Heart right ventricle (tissue), 16 donors: ENCODE measurements at regions of chr2 and their contacts with region 1.

Region 1: DNA sequence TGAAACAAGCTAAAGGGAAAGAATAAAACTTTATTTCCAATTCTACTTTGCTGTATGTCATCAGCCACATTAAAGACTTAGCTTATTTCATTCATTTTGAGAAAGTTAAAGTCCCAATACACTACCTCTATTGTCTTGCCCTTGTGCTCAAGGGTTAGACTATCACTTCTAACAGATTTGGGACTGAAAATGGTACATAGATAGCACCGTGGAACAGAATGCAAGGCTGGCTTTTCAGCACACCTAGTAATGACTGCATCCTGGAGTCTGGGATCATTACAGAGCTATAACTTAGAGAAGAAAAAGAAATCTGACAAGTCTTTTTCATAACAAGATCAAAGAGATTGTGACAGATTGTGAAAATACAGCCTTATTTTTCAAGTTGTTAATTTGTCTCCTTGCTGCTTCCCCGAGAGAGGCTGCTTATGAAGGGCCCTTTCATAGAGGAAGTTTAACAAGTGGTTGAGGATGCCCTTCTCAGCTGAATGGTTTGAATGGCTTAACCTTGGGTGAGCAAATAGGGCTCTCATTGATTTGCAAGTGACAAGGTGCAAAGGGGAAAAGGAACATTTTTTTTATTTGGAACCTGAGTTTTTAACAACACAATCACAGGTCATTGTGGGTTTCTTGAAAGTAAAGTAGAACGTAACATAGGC is 371.8 kb downstream of the EPHA4 start:
- DNase-seq: no peak
- ATAC-seq: no peak
- H3K4me3 ChIP-seq: no peak overlapping the region
- H3K27ac ChIP-seq: no peak overlapping the region
- H3K4me1 ChIP-seq: no peaks in the 10 kb centered on the region
- H3K27me3 ChIP-seq: no peaks in the 10 kb centered on the region
- CTCF ChIP-seq: no peak

Region 2: DNA sequence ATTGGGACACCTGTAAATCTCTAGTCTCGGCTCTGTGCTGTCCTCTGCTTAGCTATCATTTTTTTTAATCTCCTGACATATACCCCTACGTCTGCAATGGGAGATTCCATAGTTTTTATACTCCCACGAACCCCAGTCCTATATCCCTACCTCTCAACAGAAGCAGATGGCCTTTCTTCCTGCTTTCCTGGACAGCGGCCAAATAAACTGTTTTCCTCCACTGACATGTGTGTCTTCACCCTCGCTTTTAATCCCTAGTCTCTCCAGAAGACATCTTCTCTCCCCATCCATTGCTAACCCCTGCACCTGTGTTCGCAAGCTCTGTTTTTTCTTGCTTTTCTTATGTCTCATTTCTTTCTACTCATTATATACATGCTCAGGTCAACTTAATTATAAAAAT is 23.6 kb before region 1 on chr2:
- intact Hi-C with region 1: loop called in 1 of 10 experiments (anchors 2 kb)
- DNase-seq: no peak
- ATAC-seq: no peak
- H3K4me3 ChIP-seq: no peak overlapping the region
- H3K27ac ChIP-seq: no peak overlapping the region
- H3K4me1 ChIP-seq: no peaks in the 10 kb centered on the region
- H3K27me3 ChIP-seq: no peaks in the 10 kb centered on the region
- CTCF ChIP-seq: no peak

Region 3: DNA sequence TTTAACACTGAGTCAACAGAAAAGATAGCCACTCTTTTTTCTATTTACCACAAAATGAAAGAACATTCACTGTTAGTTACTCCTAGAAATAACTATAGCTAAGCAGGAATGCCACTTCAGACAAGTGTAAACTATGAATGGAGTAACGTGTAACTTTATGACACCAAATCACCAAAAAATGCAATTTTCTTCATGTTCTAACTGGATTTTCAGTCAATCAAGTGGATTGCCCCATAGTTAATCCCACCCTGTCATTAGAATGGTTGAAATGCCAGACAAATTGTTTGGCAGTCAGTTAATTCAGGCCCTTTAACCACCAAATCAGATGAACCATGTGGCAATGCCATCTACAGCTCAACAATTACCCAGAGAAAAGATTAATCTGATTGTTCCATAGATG is 361.9 kb after region 1 on chr2:
- intact Hi-C with region 1: no loop called
- DNase-seq: no peak
- ATAC-seq: no peak
- H3K4me3 ChIP-seq: no peak overlapping the region
- H3K27ac ChIP-seq: no peak overlapping the region
- H3K4me1 ChIP-seq: peaks cover 0 to 79% (median 3%) of the 10 kb centered on the region in 9 donors
- H3K27me3 ChIP-seq: peaks cover 0 to 2% (median 0%) of the 10 kb centered on the region in 7 donors
- CTCF ChIP-seq: no peak